ENCODE measurements at regions of chr10 and their contacts with region 1.

Region 1: GRCh38 chr10:96017191-96017687 is 26.1 kb upstream of the CCNJ start:
- DNase-seq: peak; percentile 9
- H3K4me3 ChIP-seq: no peak overlapping the region
- H3K27me3 ChIP-seq: no peaks in the 10 kb centered on the region
- CTCF ChIP-seq: peak; percentile 78

Region 2: DNA sequence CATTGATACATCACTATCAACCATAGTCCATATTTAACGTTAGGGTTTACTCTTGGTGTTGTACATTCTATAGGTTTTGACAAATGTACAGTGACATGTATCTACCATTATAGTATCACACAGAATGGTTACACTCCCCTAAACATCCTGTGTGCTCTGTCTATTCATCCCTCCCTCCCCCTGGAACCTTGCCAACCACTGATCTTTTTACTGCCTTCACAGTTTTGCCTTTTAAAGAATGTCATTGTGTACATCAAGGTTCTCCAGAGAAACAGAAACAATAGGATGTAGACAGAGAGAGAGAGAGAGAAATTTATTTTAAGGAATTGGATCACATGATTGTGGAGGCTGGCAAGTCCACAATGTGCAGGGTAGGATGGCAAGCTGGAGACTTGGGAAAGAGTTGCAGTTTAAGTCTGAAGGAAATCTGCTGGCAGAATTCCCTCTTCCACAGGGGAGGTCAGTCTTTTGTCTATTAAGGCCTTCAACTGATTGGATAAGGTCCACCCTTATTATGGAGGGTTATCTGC is 18.9 kb before region 1 on chr10:
- CTCF ChIA-PET with region 1: interaction called, 14 read pairs
- POLR2A ChIA-PET with region 1: no interaction called
- DNase-seq: no peak
- H3K4me3 ChIP-seq: no peak overlapping the region
- H3K27me3 ChIP-seq: no peaks in the 10 kb centered on the region
- CTCF ChIP-seq: no peak

Region 3: DNA sequence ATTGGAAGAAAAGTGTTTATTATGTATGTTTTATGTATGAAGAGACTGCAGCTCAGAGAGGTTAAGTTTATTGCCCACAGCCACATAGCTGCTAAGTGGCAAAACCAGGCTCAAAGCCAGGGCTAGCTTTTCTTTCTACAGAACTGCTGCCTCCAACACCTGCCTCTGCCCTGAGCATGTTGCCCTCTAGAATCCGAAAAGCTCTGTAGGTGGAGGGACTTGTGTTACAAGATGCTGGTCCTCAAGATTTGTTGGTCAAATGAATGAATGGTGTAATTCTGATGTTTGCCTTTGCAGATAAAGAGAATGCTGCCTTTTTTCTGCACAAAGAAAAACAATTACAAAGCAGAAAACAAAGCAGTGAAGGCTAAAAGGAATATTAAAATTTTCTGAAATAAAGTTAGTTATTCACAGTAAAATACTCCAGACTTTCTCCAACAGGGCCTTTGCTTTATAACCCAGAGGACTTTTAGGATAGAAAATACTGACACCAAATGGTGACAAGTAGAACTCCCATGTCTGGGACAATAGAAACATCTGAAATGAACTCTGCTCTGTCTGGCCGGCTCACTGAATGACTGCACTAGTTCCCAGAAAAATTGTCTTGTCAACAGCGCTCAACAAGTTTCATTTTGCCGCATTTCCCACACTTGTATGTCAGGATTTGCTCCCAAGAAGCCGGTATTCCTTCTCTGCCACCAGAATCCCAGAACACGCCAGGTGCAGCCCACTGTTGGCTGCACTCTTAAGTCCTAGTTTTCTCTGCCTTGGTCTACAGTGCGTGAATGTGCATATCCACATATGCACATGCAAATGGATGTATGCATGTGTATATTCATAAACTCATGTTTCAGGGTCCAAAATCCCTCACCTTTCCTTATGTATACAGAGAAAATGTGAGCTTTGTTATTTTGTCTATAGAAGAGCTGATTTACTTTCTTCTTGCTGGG is 276.0 kb after region 1 on chr10:
- CTCF ChIA-PET with region 1: interaction called, 48 read pairs
- POLR2A ChIA-PET with region 1: no interaction called
- DNase-seq: no peak
- H3K4me3 ChIP-seq: no peak overlapping the region
- H3K27me3 ChIP-seq: no peaks in the 10 kb centered on the region; the same call in 1 of the 2 replicates
- CTCF ChIP-seq: peak; percentile 46

Region 4: GRCh38 chr10:96306516-96306915 is 289.3 kb after region 1 on chr10:
- CTCF ChIA-PET with region 1: interaction called, 10 read pairs
- POLR2A ChIA-PET with region 1: no interaction called
- DNase-seq: no peak
- H3K4me3 ChIP-seq: no peak overlapping the region
- H3K27me3 ChIP-seq: peaks cover 2% of the 10 kb centered on the region; the same call in 1 of the 2 replicates
- CTCF ChIP-seq: no peak

Region 5: DNA sequence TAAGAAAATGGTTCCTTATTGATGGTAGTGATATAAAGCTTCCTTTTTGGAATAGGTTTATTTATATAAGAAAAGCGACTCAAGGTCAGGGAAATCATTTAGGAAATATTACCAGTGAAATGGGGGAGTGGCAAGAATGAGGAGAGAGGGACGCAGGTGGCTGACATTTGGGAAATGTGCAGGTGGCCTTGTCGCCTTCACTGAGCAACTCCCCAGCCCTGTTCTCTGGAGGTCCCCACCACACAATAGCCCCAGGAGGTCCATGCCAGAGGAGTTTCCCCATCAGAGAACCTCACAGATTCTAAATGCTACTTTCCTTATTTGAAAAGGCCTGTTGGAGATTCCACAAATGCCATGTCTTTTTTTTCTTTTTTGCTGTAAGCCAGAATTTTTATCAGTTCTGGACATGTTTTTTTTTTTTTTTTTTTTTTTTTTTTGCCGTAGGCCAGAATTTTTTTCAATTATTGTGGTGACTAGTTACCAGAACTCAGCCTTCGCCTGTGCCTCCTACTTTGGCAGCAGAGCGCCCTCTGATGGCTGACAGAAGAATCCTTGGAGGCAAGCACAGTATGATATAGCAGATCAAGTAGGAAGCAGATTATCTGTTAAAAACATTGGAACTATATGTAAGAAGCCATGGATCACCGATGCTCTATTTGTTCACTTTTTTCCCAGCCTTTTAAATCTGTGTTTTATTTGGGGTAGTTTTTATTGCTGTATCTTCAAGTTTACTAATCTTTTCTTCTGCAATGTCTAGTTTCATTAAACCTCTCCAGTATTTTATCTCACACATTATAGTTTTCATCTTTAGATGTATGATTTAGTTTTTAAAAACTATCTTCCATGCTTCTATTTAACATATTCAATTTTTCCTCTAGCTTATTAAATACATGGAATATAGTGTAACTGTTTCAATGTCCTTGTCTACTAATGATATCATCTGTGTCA is 323.0 kb after region 1 on chr10:
- CTCF ChIA-PET with region 1: interaction called, 43 read pairs
- POLR2A ChIA-PET with region 1: interaction called, 3 read pairs
- DNase-seq: peak; percentile 11
- H3K4me3 ChIP-seq: no peak overlapping the region
- H3K27me3 ChIP-seq: no peaks in the 10 kb centered on the region
- CTCF ChIP-seq: peak; percentile 79

Region 6: GRCh38 chr10:96488161-96488935 is 471.1 kb after region 1 on chr10:
- CTCF ChIA-PET with region 1: no interaction called
- POLR2A ChIA-PET with region 1: no interaction called
- DNase-seq: no peak
- H3K4me3 ChIP-seq: no peak overlapping the region
- H3K27me3 ChIP-seq: no peaks in the 10 kb centered on the region
- CTCF ChIP-seq: no peak

Measured in BJ (cell line).